ENCODE measurements at regions of chr13 and their contacts with region 1.

Region 1: DNA sequence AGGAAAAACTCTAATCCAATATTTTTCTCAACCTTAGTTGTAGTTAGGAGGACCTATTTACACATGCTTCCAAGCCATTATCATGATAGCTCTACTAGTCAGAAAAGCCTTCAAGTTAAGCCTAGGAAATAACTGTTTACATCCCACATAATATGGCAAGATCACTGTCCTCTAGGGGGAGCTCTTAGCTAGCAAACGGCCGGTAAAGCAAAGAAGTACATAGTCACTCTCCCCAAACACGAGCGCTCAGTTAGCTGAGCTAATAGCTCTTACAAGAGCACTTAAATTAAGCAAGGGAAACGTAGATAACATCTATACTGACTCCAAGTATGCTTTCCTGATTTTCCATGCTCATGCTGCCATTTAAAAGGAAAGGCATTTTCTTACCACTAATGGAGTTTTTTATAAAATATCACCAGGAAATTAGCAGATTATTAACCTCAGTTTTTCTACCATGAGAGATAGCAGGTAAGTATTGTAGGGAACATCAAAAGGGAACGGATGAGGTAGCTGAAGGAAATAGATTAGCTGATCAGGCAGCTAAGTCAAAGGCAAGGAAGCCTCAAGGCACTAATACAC is 100.6 kb upstream of the PABPC3 start:
- DNase-seq: peak; percentile 62
- H3K4me3 ChIP-seq: no peak overlapping the region; a peak in 1 of 4 replicates
- H3K27ac ChIP-seq: no peak overlapping the region
- H3K4me1 ChIP-seq: no peaks in the 10 kb centered on the region
- H3K27me3 ChIP-seq: peaks cover 5% of the 10 kb centered on the region; the same call in 1 of the 2 replicates
- CTCF ChIP-seq: peak; percentile 89
- EP300 ChIP-seq: no peak
- RAD21 ChIP-seq: peak; percentile 67

Region 2: GRCh38 chr13:24985109-24985508 is 10.2 kb before region 1 on chr13:
- CTCF ChIA-PET with region 1: interaction called, 15 read pairs
- POLR2A ChIA-PET with region 1: no interaction called
- DNase-seq: no peak
- H3K4me3 ChIP-seq: no peak overlapping the region
- H3K27ac ChIP-seq: no peak overlapping the region
- H3K4me1 ChIP-seq: peaks cover 0 to 3% of the 10 kb centered on the region in 2 experiments; a peak in 1 of 4 replicates
- H3K27me3 ChIP-seq: peaks cover 42% of the 10 kb centered on the region; the same call in 1 of the 2 replicates
- CTCF ChIP-seq: no peak
- EP300 ChIP-seq: no peak
- RAD21 ChIP-seq: 0 out of 2 replicates have a peak, but pooled peaks have one; percentile 6

Region 3: GRCh38 chr13:25037057-25037813 is 41.9 kb after region 1 on chr13:
- CTCF ChIA-PET with region 1: interaction called, 10 read pairs
- POLR2A ChIA-PET with region 1: no interaction called
- DNase-seq: peak; percentile 62
- H3K4me3 ChIP-seq: no peak overlapping the region; a peak in 1 of 4 replicates
- H3K27ac ChIP-seq: no peak overlapping the region
- H3K4me1 ChIP-seq: no peaks in the 10 kb centered on the region
- H3K27me3 ChIP-seq: peaks cover 36% of the 10 kb centered on the region; the same call in 1 of the 2 replicates
- CTCF ChIP-seq: peak; percentile 82
- EP300 ChIP-seq: no peak
- RAD21 ChIP-seq: peak; percentile 70

Region 4: DNA sequence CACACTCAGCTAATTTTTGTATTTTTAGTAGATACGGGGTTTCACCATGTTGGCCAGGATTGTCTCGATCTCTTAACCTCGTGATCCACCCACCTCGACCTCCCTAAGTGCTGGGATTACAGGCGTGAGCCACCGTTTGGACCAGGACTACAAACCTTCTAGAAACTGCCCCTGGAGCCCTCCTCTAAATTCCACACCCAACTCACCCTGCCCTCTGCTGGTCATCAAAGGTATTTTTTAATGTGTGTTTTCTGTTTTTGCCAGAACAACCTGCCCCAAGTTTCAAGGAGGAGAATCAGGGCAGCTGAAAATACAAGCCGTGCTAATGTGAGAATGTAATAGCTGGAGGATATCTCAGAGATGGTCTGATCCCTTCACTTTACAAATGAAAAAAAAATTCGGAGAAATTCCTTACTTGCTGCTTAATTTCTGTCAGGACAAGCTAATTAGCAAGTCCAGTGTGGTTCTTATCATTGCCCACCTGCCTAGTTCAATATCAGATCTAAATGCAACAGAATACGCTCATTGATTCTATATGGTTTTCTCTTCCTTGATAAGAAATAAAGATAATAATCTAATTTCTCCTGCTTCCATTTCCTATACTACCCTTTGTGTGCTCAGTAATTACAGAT is 380.5 kb after region 1 on chr13:
- CTCF ChIA-PET with region 1: no interaction called
- POLR2A ChIA-PET with region 1: no interaction called
- DNase-seq: peak; percentile 76
- H3K4me3 ChIP-seq: no peak overlapping the region
- H3K27ac ChIP-seq: no peak overlapping the region
- H3K4me1 ChIP-seq: peaks cover 0 to 5% of the 10 kb centered on the region in 2 experiments; a peak in 1 of 4 replicates
- H3K27me3 ChIP-seq: peaks cover 35% of the 10 kb centered on the region
- CTCF ChIP-seq: peak; percentile 76
- EP300 ChIP-seq: no peak
- RAD21 ChIP-seq: peak; percentile 71